ENCODE measurements at regions of chr13 and their contacts with region 1.

Region 1: DNA sequence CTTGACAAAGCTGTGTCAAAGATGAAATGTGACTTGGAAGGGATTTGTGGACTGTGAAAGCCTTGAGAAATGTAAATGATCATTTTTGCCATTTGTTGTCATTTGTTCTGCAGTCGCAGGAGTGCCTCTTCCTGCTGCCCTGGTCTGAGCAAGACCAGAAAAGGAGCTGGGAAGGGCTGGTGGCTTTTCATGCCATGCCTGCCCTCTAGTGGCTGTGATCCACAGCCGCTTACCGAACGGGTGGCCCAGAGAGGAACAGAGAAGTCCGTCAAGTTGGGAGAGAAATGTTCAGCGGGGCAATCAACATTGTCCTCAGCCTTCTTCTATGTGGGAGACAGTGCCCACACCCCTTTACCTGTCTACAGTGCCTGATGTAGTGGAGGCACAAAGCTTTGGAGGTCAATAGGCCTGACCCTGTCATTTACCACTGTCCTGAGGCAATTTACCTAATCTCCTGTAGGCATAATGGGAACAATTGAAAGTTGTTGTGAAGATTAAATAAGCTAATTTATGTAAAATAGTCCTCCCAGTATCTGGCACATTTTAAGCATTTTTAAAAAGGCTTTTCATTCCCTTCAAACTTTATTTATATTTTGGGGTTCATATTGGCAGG is 224.4 kb downstream of the B3GLCT start:
- DNase-seq: peak; percentile 82
- H3K4me3 ChIP-seq: no peak overlapping the region
- H3K27ac ChIP-seq: no peak overlapping the region
- H3K4me1 ChIP-seq: peaks cover 7% of the 10 kb centered on the region
- H3K27me3 ChIP-seq: peaks cover 6 to 12% of the 10 kb centered on the region in 2 experiments
- CTCF ChIP-seq: peak; percentile 90 to 95
- POLR2A ChIP-seq: no peak

Region 2: DNA sequence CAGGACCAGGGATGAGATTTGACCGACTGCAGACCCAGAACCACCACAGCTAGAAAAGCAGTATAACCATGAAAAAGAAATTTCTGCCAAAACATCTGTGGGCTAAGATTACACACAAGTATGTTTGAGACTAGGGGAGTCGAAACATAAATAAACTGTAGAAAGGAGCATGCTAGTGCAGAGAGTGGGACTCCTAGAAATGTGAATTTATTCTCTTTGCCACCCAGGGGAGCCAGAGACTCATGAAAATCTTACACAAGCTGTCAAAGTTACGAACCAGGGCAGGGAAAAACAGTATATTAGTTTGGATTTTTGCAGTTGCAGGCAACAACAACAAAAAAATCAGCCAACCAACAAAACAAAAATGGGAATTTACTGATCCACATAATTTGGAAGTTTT is 250.2 kb before region 1 on chr13:
- CTCF ChIA-PET with region 1: interaction called, 11 read pairs
- POLR2A ChIA-PET with region 1: no interaction called
- dilution Hi-C with region 1: no loop called
- intact Hi-C with region 1: no loop called
- DNase-seq: no peak
- H3K4me3 ChIP-seq: no peak overlapping the region
- H3K27ac ChIP-seq: no peak overlapping the region
- H3K4me1 ChIP-seq: no peaks in the 10 kb centered on the region
- H3K27me3 ChIP-seq: no peaks in the 10 kb centered on the region
- CTCF ChIP-seq: no peak
- POLR2A ChIP-seq: no peak

Region 3: DNA sequence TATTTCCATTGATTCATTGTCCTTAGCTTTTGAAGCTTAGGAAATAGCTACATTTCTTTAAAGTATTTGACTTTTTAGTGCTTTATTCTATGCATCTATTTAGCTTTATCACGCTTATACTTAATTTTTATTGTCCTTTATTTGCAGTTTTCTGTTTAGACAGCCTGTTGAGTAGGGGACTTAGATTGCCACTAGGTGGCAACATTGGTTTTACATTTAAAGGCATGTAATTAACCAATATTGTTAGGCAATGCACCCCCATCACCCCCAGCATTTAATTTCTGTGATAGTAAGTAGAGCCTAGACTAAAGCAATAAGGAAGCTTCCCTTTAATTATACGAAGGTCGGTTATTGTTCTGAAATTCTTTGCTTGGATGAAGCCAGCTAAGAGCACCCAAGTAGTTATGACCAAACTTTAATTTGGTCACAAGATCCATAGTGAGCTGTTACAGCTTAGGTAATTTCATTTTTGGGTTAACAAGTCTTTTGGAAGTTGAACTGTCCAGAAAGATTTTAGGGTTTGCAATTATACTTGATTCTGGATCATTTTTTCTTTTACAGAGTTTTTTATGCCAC is 187.9 kb before region 1 on chr13:
- CTCF ChIA-PET with region 1: interaction called, 244 read pairs
- POLR2A ChIA-PET with region 1: no interaction called
- dilution Hi-C with region 1: loop called (anchors 25 kb)
- intact Hi-C with region 1: loop called (anchors 1 kb)
- DNase-seq: peak; percentile 38
- H3K4me3 ChIP-seq: no peak overlapping the region
- H3K27ac ChIP-seq: no peak overlapping the region
- H3K4me1 ChIP-seq: no peaks in the 10 kb centered on the region
- H3K27me3 ChIP-seq: no peaks in the 10 kb centered on the region
- CTCF ChIP-seq: peak; percentile 41 to 44
- POLR2A ChIP-seq: no peak

Region 4: GRCh38 chr13:31409678-31410356 is 14.4 kb before region 1 on chr13:
- CTCF ChIA-PET with region 1: interaction called, 11 read pairs
- POLR2A ChIA-PET with region 1: no interaction called
- dilution Hi-C with region 1: no loop called
- intact Hi-C with region 1: no loop called
- DNase-seq: no peak
- H3K4me3 ChIP-seq: no peak overlapping the region
- H3K27ac ChIP-seq: no peak overlapping the region
- H3K4me1 ChIP-seq: no peaks in the 10 kb centered on the region
- H3K27me3 ChIP-seq: peaks cover 12 to 19% of the 10 kb centered on the region in 2 experiments
- CTCF ChIP-seq: no peak
- POLR2A ChIP-seq: no peak

Region 5: GRCh38 chr13:31663880-31664585 is 239.8 kb after region 1 on chr13:
- CTCF ChIA-PET with region 1: no interaction called
- POLR2A ChIA-PET with region 1: no interaction called
- dilution Hi-C with region 1: no loop called
- intact Hi-C with region 1: no loop called
- DNase-seq: no peak
- H3K4me3 ChIP-seq: no peak overlapping the region
- H3K27ac ChIP-seq: no peak overlapping the region
- H3K4me1 ChIP-seq: no peaks in the 10 kb centered on the region
- H3K27me3 ChIP-seq: peaks cover 0 to 2% of the 10 kb centered on the region in 2 experiments
- CTCF ChIP-seq: no peak
- POLR2A ChIP-seq: no peak

Region 6: DNA sequence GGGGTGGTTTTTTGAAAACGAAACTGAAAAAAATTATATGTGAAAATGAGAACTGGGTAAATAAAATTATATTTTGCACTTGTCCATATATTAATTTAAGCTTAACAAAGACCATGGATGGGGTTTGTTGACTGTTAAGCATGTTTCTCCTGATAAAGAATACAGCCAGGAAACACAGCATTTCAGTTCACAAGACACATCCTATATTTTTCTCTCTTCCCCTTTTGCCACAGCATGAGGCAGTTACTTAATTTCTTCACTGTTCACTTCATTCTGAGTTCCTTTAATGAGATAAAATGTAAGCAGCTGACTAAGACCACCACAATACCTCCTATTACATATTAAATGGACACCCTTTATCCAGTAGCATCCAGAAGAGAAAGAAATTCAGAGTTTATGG is 379.1 kb after region 1 on chr13:
- CTCF ChIA-PET with region 1: no interaction called
- POLR2A ChIA-PET with region 1: no interaction called
- dilution Hi-C with region 1: no loop called
- intact Hi-C with region 1: loop called (anchors 2 kb)
- DNase-seq: no peak
- H3K4me3 ChIP-seq: no peak overlapping the region
- H3K27ac ChIP-seq: no peak overlapping the region
- H3K4me1 ChIP-seq: no peaks in the 10 kb centered on the region
- H3K27me3 ChIP-seq: peaks cover 11 to 13% of the 10 kb centered on the region in 2 experiments
- CTCF ChIP-seq: no peak
- POLR2A ChIP-seq: no peak